Gastrocnemius medialis (tissue), 4 donors: ENCODE measurements at regions of chr14 and their contacts with region 1.

Region 1: GRCh38 chr14:80304238-80304732 is 93.0 kb upstream of the DIO2 start:
- DNase-seq: peak; percentile 23 to 27
- ATAC-seq: peak; percentile 78 to 89
- H3K4me3 ChIP-seq: no peak overlapping the region
- H3K27ac ChIP-seq: no peak overlapping the region
- H3K4me1 ChIP-seq: no peaks in the 10 kb centered on the region
- H3K27me3 ChIP-seq: no peaks in the 10 kb centered on the region
- CTCF ChIP-seq: no peak
- POLR2A ChIP-seq: no peak

Region 2: GRCh38 chr14:80350707-80351106 is 46.4 kb after region 1 on chr14:
- in situ Hi-C with region 1: no loop called
- intact Hi-C with region 1: loop called (anchors 1 kb)
- DNase-seq: no peak
- ATAC-seq: no peak
- H3K4me3 ChIP-seq: no peak overlapping the region
- H3K27ac ChIP-seq: no peak overlapping the region
- H3K4me1 ChIP-seq: peaks cover 0 to 4% of the 10 kb centered on the region in 2 donors
- H3K27me3 ChIP-seq: no peaks in the 10 kb centered on the region
- CTCF ChIP-seq: no peak
- POLR2A ChIP-seq: no peak